IMR-90 (cell line): ENCODE measurements at regions of chr19 and their contacts with region 1.

Region 1: DNA sequence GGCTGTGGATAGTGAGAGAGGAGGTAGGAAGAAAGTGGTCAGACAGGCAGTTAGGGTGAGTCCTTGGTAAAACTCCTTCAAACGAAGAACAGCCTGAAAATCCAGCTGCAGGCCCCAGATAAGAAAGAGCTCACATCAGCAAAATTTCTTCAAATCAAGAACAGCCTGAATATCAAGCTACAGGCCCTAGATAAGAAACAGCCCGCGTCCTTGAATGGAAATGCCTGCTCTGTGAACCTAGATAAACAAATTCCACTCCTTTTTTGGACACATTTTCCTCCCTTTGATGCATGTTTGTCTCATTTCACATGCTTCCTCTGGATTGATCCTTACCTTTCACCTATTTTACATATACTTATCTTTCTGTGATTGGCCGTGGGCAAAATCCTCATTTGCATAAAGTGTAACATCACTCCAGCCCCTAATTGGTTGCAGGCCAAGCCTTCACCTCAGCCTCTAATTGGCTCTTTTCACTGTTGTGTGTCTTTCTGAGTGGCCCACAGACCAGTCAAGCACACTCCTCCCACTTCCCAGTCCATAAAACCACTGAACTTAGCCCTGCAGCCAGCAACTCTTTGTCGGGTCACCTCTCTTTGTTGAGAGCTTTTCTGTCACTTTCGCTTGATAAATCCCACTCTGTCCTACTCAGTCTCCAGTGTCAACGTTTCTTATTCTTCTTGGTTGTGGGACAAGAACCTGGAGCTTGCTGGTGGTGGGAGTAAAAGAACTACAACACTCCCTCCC is 6.0 kb upstream of the SULT2A1 start:
- DNase-seq: no peak
- ATAC-seq: peak; percentile 29
- H3K4me3 ChIP-seq: no peak overlapping the region
- H3K27ac ChIP-seq: no peak overlapping the region
- H3K4me1 ChIP-seq: no peaks in the 10 kb centered on the region
- H3K27me3 ChIP-seq: no peaks in the 10 kb centered on the region
- CTCF ChIP-seq: no peak
- POLR2A ChIP-seq: no peak
- RAD21 ChIP-seq: no peak

Region 2: GRCh38 chr19:47994209-47994802 is 102.2 kb after region 1 on chr19 and contains the start of gene ELSPBP1:
- CTCF ChIA-PET with region 1: no interaction called
- POLR2A ChIA-PET with region 1: no interaction called
- dilution Hi-C with region 1: no loop called
- in situ Hi-C with region 1: loop called (anchors 10 kb)
- intact Hi-C with region 1: no loop called
- DNase-seq: no peak
- ATAC-seq: no peak
- H3K4me3 ChIP-seq: no peak within 1 kb of the TSS
- H3K27ac ChIP-seq: no peak within 1 kb of the TSS
- H3K4me1 ChIP-seq: no peaks in the 10 kb centered on the region
- H3K27me3 ChIP-seq: peaks cover 3% of the 10 kb centered on the region; the same call in 1 of the 2 replicates
- CTCF ChIP-seq: no peak
- POLR2A ChIP-seq: no peak
- RAD21 ChIP-seq: no peak
- total RNA-seq, gene ELSPBP1: not detected in 2 replicates

Region 3: DNA sequence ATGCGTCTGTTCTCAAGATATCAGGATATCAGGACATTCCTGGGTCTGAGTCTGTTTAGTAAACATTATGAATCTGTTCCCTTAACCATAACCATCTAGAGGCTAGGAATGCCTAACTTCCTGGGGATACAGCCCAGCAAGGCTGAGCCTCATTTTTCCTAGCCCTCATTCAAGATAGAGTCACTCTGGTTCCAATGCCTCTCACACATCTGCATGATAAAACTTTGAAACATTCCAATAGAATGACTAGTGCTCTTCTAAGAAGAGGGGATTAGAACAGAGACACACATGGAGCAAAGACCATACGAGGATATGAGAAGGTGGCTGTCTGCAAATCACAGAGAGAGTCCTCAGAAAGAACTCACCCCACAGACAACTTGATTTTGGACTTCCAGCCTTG is 172.4 kb after region 1 on chr19:
- CTCF ChIA-PET with region 1: no interaction called
- POLR2A ChIA-PET with region 1: no interaction called
- dilution Hi-C with region 1: no loop called
- in situ Hi-C with region 1: no loop called
- intact Hi-C with region 1: no loop called
- DNase-seq: peak; percentile 54
- ATAC-seq: peak; percentile 95
- H3K4me3 ChIP-seq: no peak overlapping the region
- H3K27ac ChIP-seq: no peak overlapping the region
- H3K4me1 ChIP-seq: no peaks in the 10 kb centered on the region
- H3K27me3 ChIP-seq: peaks cover 6% of the 10 kb centered on the region; the same call in 1 of the 2 replicates
- CTCF ChIP-seq: no peak
- POLR2A ChIP-seq: no peak
- RAD21 ChIP-seq: no peak